ENCODE measurements at regions of chr1 and their contacts with region 1.

Region 1: GRCh38 chr1:152869808-152870419 is 8.2 kb upstream of the SMCP start:
- DNase-seq: peak; percentile 65
- H3K4me3 ChIP-seq: no peak overlapping the region
- H3K27ac ChIP-seq: no peak overlapping the region
- H3K4me1 ChIP-seq: peaks cover 0 to 3% of the 10 kb centered on the region in 2 experiments; a peak in 1 of 4 replicates
- H3K27me3 ChIP-seq: no peaks in the 10 kb centered on the region; the same call in 1 of the 2 replicates
- CTCF ChIP-seq: peak; percentile 85
- EP300 ChIP-seq: no peak
- RAD21 ChIP-seq: peak; percentile 60

Region 2: DNA sequence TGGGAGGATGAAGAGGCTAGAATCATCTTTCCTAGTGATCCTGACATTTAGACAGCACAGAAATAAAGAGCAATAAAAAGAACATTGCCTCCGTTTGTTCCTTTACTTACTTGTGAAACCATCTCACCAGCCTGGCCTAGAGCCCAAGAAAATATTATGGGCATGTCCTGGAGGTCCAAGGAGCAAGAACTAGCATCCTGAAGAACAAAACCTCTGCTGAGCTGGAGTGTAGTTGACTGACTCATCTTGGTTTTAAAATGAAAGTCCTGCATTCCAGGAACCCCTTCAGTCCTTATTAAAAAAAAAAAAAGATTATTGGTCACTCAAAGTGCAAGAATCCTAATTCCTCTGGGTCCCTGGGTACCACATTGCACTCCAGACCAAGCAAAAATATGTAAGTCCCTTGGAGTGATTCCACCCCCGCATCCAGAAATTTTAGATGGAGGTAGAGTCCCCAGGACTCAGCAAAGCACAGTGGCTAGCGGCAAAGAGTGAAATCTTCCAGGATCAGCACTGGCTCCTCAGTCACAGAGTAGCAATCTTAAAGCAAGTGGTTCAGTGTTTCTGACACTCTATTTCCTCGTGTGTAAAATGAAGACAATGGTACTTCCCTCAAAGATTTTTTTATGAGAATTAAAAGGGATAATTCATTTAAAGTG is 15.2 kb after region 1 on chr1:
- CTCF ChIA-PET with region 1: interaction called, 11 read pairs
- POLR2A ChIA-PET with region 1: no interaction called
- DNase-seq: no peak
- H3K4me3 ChIP-seq: peak overlapping the region in 1 of 2 experiments; percentile 25; a peak in 1 of 4 replicates
- H3K27ac ChIP-seq: peak overlapping the region in 1 of 2 experiments; percentile 89; a peak in 2 of 4 replicates
- H3K4me1 ChIP-seq: peaks cover 0 to 32% of the 10 kb centered on the region in 2 experiments; a peak in 2 of 4 replicates
- H3K27me3 ChIP-seq: no peaks in the 10 kb centered on the region
- CTCF ChIP-seq: no peak
- EP300 ChIP-seq: no peak; a peak in 1 of 4 replicates
- RAD21 ChIP-seq: no peak

Region 3: GRCh38 chr1:153220606-153221303 is 350.8 kb after region 1 on chr1:
- CTCF ChIA-PET with region 1: interaction called, 21 read pairs
- POLR2A ChIA-PET with region 1: no interaction called
- DNase-seq: no peak
- H3K4me3 ChIP-seq: no peak overlapping the region
- H3K27ac ChIP-seq: no peak overlapping the region
- H3K4me1 ChIP-seq: no peaks in the 10 kb centered on the region; a peak in 1 of 4 replicates
- H3K27me3 ChIP-seq: peaks cover 25% of the 10 kb centered on the region; the same call in 1 of the 2 replicates
- CTCF ChIP-seq: no peak
- EP300 ChIP-seq: no peak
- RAD21 ChIP-seq: no peak

Measured in SK-N-SH (cell line).